Activated CD4-positive, alpha-beta T cell treated with anti-CD3 and anti-CD28 coated beads, Interleukin-2, amount 10 ng/mL, durations not matched to agents 24 days and 14 days (primary cell): ENCODE measurements at regions of chr20 and their contacts with region 1.

Region 1: GRCh38 chr20:47272893-47273590 is 83.5 kb downstream of the ZMYND8 start:
- DNase-seq: peak; percentile 90
- H3K4me3 Mint-ChIP-seq: peak overlapping the region; percentile 74
- H3K27ac Mint-ChIP-seq: peak overlapping the region; percentile 96
- H3K4me1 Mint-ChIP-seq: peaks cover 37% of the 10 kb centered on the region
- H3K27me3 Mint-ChIP-seq: no peaks in the 10 kb centered on the region

Region 2: GRCh38 chr20:47196091-47197081 is 76.7 kb before region 1 on chr20:
- intact Hi-C with region 1: loop called (anchors 1 kb)
- DNase-seq: peak; percentile 93
- H3K4me3 Mint-ChIP-seq: peak overlapping the region; percentile 7
- H3K27ac Mint-ChIP-seq: peak overlapping the region; percentile 65
- H3K4me1 Mint-ChIP-seq: peaks cover 8% of the 10 kb centered on the region
- H3K27me3 Mint-ChIP-seq: peaks cover 5% of the 10 kb centered on the region

Region 3: GRCh38 chr20:47356526-47357295 is 83.7 kb after region 1 on chr20 and contains the start of gene ZMYND8:
- intact Hi-C with region 1: loop called (anchors 1 kb)
- DNase-seq: peak; percentile 99
- H3K4me3 Mint-ChIP-seq: peak within 1 kb of the TSS; percentile 91
- H3K27ac Mint-ChIP-seq: peak within 1 kb of the TSS; percentile 99
- H3K4me1 Mint-ChIP-seq: peaks cover 30% of the 10 kb centered on the region
- H3K27me3 Mint-ChIP-seq: no peaks in the 10 kb centered on the region
- total RNA-seq, gene ZMYND8: 38.1 and 40.0 TPM in 2 replicates

Region 4: DNA sequence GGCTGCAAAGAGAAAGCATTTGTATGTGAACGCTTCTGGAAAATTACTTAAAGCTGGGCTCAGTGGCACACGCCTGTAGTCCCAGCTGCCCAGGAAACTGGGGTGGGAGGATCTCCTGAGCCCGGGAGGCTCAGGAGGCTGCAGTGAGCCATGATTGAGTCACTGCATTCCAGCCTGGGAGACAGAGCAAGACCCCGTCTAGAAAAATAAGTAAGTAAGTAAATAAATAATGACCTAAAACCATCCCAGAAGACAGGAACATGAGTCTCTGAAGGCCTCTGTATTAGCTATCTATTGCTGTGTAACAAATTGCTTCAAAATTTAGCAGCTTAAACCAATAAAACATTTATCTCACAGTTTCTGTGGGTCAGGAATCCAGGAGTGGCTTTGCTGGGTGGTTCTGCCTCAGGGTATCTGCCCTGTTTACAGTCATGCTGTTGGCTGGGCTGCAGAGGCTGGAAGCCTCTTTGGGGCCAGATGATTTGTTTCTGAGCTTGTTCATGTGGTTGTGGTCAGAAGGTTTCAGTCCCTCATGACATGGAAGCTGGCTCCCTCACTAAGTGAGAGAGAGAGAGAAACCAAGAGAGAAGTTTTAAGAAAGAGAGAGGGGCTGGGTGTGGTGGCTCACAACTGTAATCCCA is 180.2 kb after region 1 on chr20:
- intact Hi-C with region 1: loop called (anchors 1 kb)
- DNase-seq: peak; percentile 87
- H3K4me3 Mint-ChIP-seq: peak overlapping the region; percentile 20
- H3K27ac Mint-ChIP-seq: peak overlapping the region; percentile 73
- H3K4me1 Mint-ChIP-seq: peaks cover 41% of the 10 kb centered on the region
- H3K27me3 Mint-ChIP-seq: no peaks in the 10 kb centered on the region

Region 5: DNA sequence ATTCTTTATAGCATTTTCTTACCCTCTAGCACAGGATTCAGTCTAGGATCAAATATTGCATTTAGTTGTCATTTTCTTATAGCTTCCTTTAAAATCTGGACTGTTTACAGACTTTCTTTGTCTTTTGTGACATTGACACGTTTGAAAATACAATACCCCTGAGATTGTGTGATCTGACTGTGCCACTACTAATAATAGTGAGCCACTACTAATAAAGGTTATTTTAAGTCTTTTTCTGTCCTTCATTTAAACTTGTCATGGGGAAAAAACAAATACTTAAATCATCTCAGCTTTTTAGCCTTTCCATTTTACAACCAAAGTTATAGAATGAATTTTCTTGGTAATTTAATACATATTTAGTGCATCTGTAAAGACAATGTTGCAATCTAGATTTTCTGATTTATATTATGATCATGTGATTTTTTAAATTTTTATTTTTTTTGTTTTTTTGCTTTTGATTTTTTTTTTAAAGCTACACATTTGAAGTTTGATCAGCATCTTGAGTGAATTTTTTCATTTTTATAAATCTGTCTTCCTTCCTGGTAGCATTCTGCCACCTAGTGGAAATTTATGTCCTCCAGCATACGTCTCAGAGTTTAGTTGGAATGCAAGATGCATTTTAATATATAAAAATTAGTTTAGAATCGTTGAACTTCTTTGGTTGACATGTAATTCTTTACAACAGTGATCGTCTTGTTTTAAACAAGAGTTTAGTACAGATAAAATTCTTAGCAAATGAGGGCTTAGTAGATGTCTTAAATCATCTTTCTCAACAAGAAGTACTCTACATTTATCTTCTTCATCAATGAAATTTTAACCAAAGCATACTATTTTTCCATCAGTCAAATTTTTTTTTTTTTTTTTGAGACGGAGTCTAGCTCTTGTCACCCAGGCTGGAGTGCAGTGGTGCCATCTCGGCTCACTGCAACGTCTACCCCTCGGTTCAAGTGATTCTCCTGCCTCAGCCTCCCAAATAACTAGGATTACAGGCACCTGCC is 348.1 kb after region 1 on chr20:
- intact Hi-C with region 1: loop called (anchors 1 kb)
- DNase-seq: peak; percentile 72
- H3K4me3 Mint-ChIP-seq: no peak overlapping the region
- H3K27ac Mint-ChIP-seq: no peak overlapping the region
- H3K4me1 Mint-ChIP-seq: peaks cover 27% of the 10 kb centered on the region
- H3K27me3 Mint-ChIP-seq: no peaks in the 10 kb centered on the region